Tibial artery (tissue), 4 donors: ENCODE measurements at regions of chrX and their contacts with region 1.

Region 1: DNA sequence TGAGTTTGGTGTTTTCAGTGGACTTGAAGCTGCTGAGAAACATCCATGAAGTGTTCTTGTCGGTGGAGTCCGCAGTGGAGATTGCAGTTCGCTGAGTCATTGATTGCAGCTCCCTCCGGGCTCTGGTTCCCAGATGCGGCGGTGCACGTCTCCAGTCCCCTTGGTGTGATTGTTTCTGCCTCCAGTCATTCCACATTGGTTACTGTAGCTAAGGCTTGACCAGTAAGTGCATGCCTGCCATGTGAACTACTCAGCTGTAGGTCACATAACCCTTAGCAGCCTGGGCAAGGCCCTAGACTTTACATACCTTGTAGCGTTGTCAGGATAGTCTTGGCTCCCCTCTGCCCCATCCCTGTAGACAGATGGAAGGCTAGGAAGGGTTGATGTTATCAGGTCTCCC is 53.8 kb upstream of the CLCN4 start:
- DNase-seq: no peak
- H3K4me3 ChIP-seq: no peak overlapping the region
- H3K27ac ChIP-seq: peak overlapping the region; percentile 33 to 80
- H3K4me1 ChIP-seq: peaks cover 0 to 52% (median 15%) of the 10 kb centered on the region in 4 donors
- H3K27me3 ChIP-seq: no peaks in the 10 kb centered on the region
- CTCF ChIP-seq: no peak

Region 2: GRCh38 chrX:10014462-10015356 is 88.3 kb before region 1 on chrX:
- intact Hi-C with region 1: loop called (anchors 5 kb)
- DNase-seq: peak; percentile 85 to 93
- H3K4me3 ChIP-seq: peak overlapping the region; percentile 63 to 72
- H3K27ac ChIP-seq: peak overlapping the region; percentile 90 to 94
- H3K4me1 ChIP-seq: peaks cover 0 to 28% (median 7%) of the 10 kb centered on the region in 4 donors
- H3K27me3 ChIP-seq: no peaks in the 10 kb centered on the region
- CTCF ChIP-seq: no peak